Activated naive CD4-positive, alpha-beta T cell treated with anti-CD3 and anti-CD28 coated beads, Interleukin-2, amount 10 ng/mL, durations not matched to agents 7 days and 5 days (primary cell): ENCODE measurements at regions of chr10 and their contacts with region 1.

Region 1: GRCh38 chr10:6050801-6051445 is 11.2 kb downstream of the IL2RA start:
- DNase-seq: peak; percentile 97
- H3K4me3 Mint-ChIP-seq: peak overlapping the region; percentile 87
- H3K27ac Mint-ChIP-seq: peak overlapping the region; percentile 99
- H3K4me1 Mint-ChIP-seq: peaks cover 86% of the 10 kb centered on the region
- H3K27me3 Mint-ChIP-seq: no peaks in the 10 kb centered on the region

Region 2: DNA sequence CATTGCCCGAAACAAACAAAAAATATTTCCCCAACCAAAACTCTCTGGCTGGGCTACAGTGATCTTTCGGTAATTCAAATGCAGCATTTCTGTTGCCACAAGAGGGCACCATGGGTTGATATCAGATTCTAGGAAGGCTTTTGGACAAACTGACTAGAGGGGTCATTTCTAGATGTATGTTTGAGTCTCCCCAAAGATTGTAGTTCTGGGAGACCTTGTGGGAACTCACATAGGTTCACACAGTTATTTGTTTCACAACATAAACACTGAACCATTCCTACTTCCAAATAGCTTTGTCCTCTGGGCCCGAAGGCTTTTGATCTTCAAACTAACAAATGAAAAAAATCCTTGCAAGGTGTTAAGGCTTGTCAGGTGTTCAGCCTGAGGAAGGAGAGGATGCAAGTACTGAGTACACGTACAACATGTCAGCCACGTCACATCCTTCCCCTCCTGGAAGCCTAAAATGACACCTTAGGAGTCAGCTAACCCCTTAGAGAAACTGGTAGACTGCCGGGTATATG is 36.6 kb before region 1 on chr10:
- CTCF ChIA-PET with region 1: interaction called, 26 read pairs
- DNase-seq: peak; percentile 77
- H3K4me3 Mint-ChIP-seq: peak overlapping the region; percentile 30
- H3K27ac Mint-ChIP-seq: peak overlapping the region; percentile 99
- H3K4me1 Mint-ChIP-seq: peaks cover 43% of the 10 kb centered on the region
- H3K27me3 Mint-ChIP-seq: no peaks in the 10 kb centered on the region

Region 3: GRCh38 chr10:6062101-6062771 is 11.3 kb after region 1 on chr10 and contains the start of gene IL2RA:
- CTCF ChIA-PET with region 1: interaction called, 17 read pairs
- DNase-seq: peak; percentile 75
- H3K4me3 Mint-ChIP-seq: peak within 1 kb of the TSS; percentile 81
- H3K27ac Mint-ChIP-seq: peak within 1 kb of the TSS; percentile 95
- H3K4me1 Mint-ChIP-seq: peaks cover 74% of the 10 kb centered on the region
- H3K27me3 Mint-ChIP-seq: no peaks in the 10 kb centered on the region

Region 4: DNA sequence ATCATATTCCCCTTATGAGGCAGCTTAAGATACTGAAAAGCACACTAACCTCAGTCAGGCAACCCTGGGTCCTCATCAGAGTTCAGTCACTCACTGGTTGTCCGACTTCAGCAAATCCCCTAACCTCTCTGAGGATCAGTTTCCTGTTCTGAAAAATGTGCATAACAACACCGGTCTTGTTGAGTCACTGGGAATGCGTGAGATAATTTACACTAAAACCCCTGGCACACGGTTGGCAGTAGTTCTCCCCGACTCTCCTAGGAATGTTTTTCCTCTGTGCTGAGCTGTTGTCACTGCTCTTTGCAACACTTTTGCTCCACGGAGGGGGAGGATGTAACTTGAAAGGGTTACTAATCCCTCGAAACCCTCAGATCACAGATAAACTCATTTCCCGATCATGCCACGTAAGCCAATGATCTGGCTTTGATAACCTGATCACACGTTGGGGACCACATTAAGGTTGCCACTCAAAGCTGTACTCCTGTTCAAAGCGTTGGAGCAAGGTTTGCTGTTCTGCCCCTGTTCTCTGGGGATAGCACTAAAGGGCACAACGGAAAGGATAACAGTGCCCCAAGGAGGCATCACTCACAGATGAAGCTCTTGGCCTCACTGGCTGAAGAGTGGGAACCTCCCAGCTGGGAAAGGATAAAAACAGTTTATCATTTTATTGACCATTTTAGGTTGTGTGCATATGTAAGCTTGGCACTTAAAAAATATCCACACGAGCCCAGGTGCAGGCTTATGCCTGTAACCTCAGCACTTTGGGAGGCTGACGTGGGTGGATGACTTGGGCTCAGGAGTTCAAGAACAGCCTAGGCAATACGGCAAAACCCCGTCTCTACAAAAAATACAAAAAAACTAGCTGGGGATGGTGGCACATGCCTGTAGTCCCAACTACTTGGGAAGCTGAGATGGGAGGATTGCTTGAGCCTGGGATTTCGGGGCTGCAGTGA is 32.9 kb after region 1 on chr10:
- CTCF ChIA-PET with region 1: interaction called, 47 read pairs
- DNase-seq: peak; percentile 74
- H3K4me3 Mint-ChIP-seq: peak overlapping the region; percentile 75
- H3K27ac Mint-ChIP-seq: peak overlapping the region; percentile 96
- H3K4me1 Mint-ChIP-seq: peaks cover 78% of the 10 kb centered on the region
- H3K27me3 Mint-ChIP-seq: peaks cover 4% of the 10 kb centered on the region

Region 5: GRCh38 chr10:6163364-6164270 is 112.7 kb after region 1 on chr10:
- CTCF ChIA-PET with region 1: no interaction called
- DNase-seq: peak; percentile 95
- H3K4me3 Mint-ChIP-seq: peak overlapping the region; percentile 85
- H3K27ac Mint-ChIP-seq: peak overlapping the region; percentile 94
- H3K4me1 Mint-ChIP-seq: peaks cover 57% of the 10 kb centered on the region
- H3K27me3 Mint-ChIP-seq: no peaks in the 10 kb centered on the region